ENCODE measurements at regions of chr10 and their contacts with region 1.

Region 1: DNA sequence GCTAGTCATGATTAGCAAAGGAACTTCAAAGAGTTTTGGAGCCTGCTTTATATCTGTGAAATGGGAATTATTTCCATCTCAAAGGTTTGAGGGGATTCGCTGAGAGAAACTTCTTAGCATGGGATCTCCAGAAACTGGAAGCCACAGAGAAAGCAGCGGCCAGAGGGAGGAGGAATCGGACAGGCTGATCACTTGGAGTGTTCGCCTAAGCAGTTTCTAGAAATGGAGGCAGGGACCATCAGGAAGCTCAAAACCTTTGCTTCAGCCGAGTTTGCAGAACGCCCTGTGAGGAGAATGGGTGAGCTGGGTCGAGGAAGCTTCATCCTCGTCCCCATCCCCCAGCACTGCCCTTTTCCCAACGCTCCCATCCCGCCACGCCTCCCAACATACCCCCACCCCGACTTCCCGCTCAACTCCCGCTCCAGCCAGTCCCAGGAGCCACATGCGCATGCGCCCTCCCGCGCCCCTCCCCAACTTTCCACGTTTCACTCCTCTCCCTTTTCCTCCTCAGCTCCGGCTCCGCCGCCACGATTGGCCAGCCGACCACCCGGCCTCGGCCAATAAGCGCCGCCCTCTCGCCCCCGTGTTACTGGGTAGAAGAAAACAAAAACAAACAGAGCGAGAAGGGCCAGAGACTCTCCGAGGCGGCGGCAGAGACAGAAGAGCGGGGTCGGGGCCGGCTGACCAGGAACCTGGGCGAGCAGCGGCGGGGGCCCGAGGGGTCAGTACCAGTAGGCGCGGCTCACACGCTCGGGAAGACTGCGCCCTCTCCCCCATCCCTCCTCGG is at the start of gene PDCD4:
- DNase-seq: peak; percentile 98
- H3K4me3 Mint-ChIP-seq: peak within 1 kb of the TSS; percentile 78
- H3K27ac Mint-ChIP-seq: peak within 1 kb of the TSS; percentile 91
- H3K4me1 Mint-ChIP-seq: peaks cover 30% of the 10 kb centered on the region
- H3K27me3 Mint-ChIP-seq: no peaks in the 10 kb centered on the region
- CTCF ChIP-seq: no peak
- total RNA-seq, gene PDCD4: 80.7 and 133 TPM in 2 replicates

Region 2: GRCh38 chr10:110241407-110241806 is 630.1 kb before region 1 on chr10:
- CTCF ChIA-PET with region 1: no interaction called
- POLR2A ChIA-PET with region 1: no interaction called
- intact Hi-C with region 1: no loop called
- DNase-seq: no peak
- H3K4me3 Mint-ChIP-seq: no peak overlapping the region
- H3K27ac Mint-ChIP-seq: no peak overlapping the region
- H3K4me1 Mint-ChIP-seq: peaks cover 21% of the 10 kb centered on the region
- H3K27me3 Mint-ChIP-seq: no peaks in the 10 kb centered on the region
- CTCF ChIP-seq: no peak

Region 3: DNA sequence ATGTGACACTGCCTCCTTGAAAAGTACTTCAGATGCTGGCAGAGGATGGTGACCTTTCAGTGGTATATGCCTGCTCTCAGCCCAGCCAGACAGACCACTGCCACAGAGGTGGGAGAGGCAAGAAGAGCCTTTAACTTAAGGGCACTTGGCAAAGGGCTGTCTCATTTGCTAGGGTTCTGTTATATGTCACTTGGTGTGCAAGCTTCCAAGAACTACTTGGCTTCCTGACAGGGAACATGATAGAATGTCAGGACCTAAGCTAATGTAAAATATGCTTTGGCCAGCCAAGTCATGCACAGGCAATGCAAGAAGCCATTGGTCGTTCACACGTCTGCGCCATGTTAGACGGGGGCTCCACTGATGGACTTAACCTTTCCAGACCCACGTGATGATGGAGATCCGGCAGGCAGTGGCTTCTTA is 172.7 kb before region 1 on chr10:
- CTCF ChIA-PET with region 1: no interaction called
- POLR2A ChIA-PET with region 1: no interaction called
- intact Hi-C with region 1: no loop called
- DNase-seq: no peak
- H3K4me3 Mint-ChIP-seq: no peak overlapping the region
- H3K27ac Mint-ChIP-seq: no peak overlapping the region
- H3K4me1 Mint-ChIP-seq: no peaks in the 10 kb centered on the region
- H3K27me3 Mint-ChIP-seq: no peaks in the 10 kb centered on the region
- CTCF ChIP-seq: no peak

Region 4: GRCh38 chr10:110774069-110775019 is 97.1 kb before region 1 on chr10:
- CTCF ChIA-PET with region 1: no interaction called
- POLR2A ChIA-PET with region 1: interaction called, 18 read pairs
- intact Hi-C with region 1: no loop called
- DNase-seq: peak; percentile 89
- H3K4me3 Mint-ChIP-seq: no peak overlapping the region
- H3K27ac Mint-ChIP-seq: peak overlapping the region; percentile 94
- H3K4me1 Mint-ChIP-seq: peaks cover 28% of the 10 kb centered on the region
- H3K27me3 Mint-ChIP-seq: no peaks in the 10 kb centered on the region
- CTCF ChIP-seq: no peak

Region 5: DNA sequence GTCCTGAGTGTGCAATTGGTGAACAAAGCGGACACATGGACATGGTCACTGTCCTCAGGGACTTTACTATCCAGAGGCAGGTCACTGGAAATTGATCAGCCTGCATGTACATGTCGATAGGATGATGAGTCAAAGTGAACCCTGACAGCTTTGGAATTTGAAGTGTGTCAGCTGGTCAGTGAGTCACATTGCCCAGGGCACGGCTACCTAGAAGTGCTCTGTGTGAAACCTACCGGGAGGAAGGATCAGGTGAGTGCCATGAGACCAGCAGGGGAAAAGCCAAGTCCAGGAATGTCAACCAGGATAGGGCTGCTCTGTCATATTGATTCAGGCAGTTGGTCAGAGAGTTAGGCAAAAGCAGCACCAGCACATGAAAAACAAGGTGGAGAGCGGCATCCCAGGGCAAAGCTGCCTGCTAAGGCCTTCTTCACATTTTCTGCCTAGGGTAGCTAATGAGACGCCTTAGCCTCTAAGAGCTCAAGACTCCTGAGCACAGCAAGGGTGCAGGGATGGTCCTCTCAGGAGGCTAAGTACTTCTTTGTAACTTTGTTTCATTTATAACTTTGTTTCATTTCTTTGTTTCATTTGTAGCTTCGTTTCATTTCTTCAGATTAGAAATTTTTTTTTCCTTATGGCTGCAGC is 19.1 kb before region 1 on chr10:
- CTCF ChIA-PET with region 1: interaction called, 10 read pairs
- POLR2A ChIA-PET with region 1: interaction called, 97 read pairs
- intact Hi-C with region 1: no loop called
- DNase-seq: peak; percentile 86
- H3K4me3 Mint-ChIP-seq: no peak overlapping the region
- H3K27ac Mint-ChIP-seq: peak overlapping the region; percentile 36
- H3K4me1 Mint-ChIP-seq: peaks cover 36% of the 10 kb centered on the region
- H3K27me3 Mint-ChIP-seq: no peaks in the 10 kb centered on the region
- CTCF ChIP-seq: no peak

Region 6: GRCh38 chr10:110883924-110884323 is 12.4 kb after region 1 on chr10:
- CTCF ChIA-PET with region 1: interaction called, 3 read pairs
- POLR2A ChIA-PET with region 1: interaction called, 17 read pairs
- intact Hi-C with region 1: no loop called
- DNase-seq: no peak
- H3K4me3 Mint-ChIP-seq: no peak overlapping the region
- H3K27ac Mint-ChIP-seq: no peak overlapping the region
- H3K4me1 Mint-ChIP-seq: peaks cover 22% of the 10 kb centered on the region
- H3K27me3 Mint-ChIP-seq: no peaks in the 10 kb centered on the region
- CTCF ChIP-seq: no peak

Region 7: GRCh38 chr10:110918643-110919363 is 47.3 kb after region 1 on chr10 and contains the start of gene BBIP1:
- CTCF ChIA-PET with region 1: interaction called, 3 read pairs
- POLR2A ChIA-PET with region 1: interaction called, 23 read pairs
- intact Hi-C with region 1: no loop called
- DNase-seq: peak; percentile 100
- H3K4me3 Mint-ChIP-seq: peak within 1 kb of the TSS; percentile 89
- H3K27ac Mint-ChIP-seq: peak within 1 kb of the TSS; percentile 100
- H3K4me1 Mint-ChIP-seq: peaks cover 22% of the 10 kb centered on the region
- H3K27me3 Mint-ChIP-seq: no peaks in the 10 kb centered on the region
- CTCF ChIP-seq: no peak
- total RNA-seq, gene BBIP1: 46.9 and 68.7 TPM in 2 replicates